ENCODE measurements at regions of chr10 and their contacts with region 1.

Region 1: DNA sequence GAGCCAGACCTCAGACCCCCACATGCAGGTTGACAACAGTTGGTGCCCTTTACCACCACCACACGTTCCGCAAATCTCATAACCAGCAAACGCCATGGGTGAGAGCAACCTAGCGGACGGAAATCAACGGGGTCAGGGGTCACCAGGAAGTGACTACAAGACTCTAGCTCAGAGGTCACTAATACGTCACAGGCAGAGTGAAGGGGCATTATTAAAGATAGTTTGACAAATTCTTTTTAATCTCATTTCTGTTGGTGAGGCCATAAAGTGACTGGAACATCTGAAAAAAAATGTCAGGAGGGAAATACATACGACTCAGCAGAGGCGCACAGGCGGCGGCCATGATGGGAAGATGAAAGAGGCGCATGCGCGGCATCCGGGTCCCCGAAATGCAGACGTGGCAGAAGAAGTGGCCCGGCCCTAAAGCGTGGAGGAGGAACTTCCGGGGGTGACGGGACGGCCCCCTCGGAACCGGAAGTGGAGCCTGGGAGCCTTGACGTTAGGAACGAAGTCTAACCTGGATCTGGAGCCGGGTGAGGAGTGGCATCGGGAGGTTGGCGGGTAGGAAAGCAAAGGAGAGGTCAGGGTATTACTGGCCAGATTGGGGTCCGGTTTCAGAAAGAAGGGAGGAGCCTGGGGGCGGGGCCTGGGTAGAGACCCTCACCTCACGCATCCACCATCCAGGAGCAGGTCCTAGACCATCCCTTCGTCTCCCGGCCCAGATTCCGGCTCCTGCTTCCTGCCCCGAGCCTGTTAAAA is at the start of gene SEC24C:
- DNase-seq: peak; percentile 98
- H3K4me3 Mint-ChIP-seq: peak within 1 kb of the TSS; percentile 97
- H3K27ac Mint-ChIP-seq: peak within 1 kb of the TSS; percentile 100
- H3K4me1 Mint-ChIP-seq: peaks cover 32% of the 10 kb centered on the region
- H3K27me3 Mint-ChIP-seq: no peaks in the 10 kb centered on the region
- total RNA-seq, gene SEC24C: 106 TPM in 2 replicates

Region 2: GRCh38 chr10:73358331-73359279 is 385.5 kb before region 1 on chr10 and contains the start of gene CFAP70:
- intact Hi-C with region 1: no loop called
- DNase-seq: peak; percentile 98
- H3K4me3 Mint-ChIP-seq: peak within 1 kb of the TSS; percentile 93
- H3K27ac Mint-ChIP-seq: peak within 1 kb of the TSS; percentile 89
- H3K4me1 Mint-ChIP-seq: peaks cover 16% of the 10 kb centered on the region
- H3K27me3 Mint-ChIP-seq: peaks cover 15% of the 10 kb centered on the region
- total RNA-seq, gene CFAP70: 0.17 and 0.33 TPM in 2 replicates

Region 3: GRCh38 chr10:73413528-73414229 is 330.4 kb before region 1 on chr10 and contains the start of gene ANXA7:
- intact Hi-C with region 1: loop called (anchors 1 kb)
- DNase-seq: peak; percentile 97
- H3K4me3 Mint-ChIP-seq: peak within 1 kb of the TSS; percentile 92
- H3K27ac Mint-ChIP-seq: peak within 1 kb of the TSS; percentile 90
- H3K4me1 Mint-ChIP-seq: peaks cover 33% of the 10 kb centered on the region
- H3K27me3 Mint-ChIP-seq: no peaks in the 10 kb centered on the region
- total RNA-seq, gene ANXA7: 169 and 171 TPM in 2 replicates

Region 4: GRCh38 chr10:73625884-73626752 is 118.0 kb before region 1 on chr10:
- intact Hi-C with region 1: loop called (anchors 5 kb)
- DNase-seq: peak; percentile 98
- H3K4me3 Mint-ChIP-seq: peak overlapping the region; percentile 96
- H3K27ac Mint-ChIP-seq: peak overlapping the region; percentile 96
- H3K4me1 Mint-ChIP-seq: peaks cover 16% of the 10 kb centered on the region
- H3K27me3 Mint-ChIP-seq: no peaks in the 10 kb centered on the region

Region 5: DNA sequence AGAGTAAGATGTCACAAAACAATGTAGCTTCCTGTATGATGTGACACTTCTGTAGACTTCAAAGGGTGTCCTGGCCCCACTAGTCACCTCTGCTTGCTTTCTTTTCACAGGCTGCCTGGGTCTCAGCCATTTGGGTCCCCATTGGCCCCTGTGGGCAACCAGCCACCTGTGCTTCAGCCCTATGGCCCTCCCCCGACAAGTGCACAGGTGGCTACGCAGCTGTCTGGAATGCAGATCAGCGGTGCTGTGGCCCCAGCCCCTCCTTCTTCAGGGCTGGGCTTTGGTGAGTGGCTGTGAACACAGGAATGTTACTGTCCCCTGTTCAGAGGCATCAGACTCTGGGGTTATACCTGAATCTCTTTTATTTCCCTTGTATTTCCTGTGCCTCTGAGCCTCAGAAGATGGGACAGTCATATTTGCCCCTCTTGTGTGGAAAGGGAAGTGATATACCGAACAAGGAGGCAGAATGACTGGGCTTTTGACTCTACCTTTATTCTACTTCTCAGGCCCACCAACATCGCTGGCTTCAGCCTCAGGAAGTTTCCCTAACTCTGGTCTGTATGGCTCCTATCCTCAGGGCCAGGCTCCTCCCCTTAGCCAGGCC is 15.5 kb after region 1 on chr10:
- intact Hi-C with region 1: loop called (anchors 2 kb)
- DNase-seq: peak; percentile 72
- H3K4me3 Mint-ChIP-seq: peak overlapping the region; percentile 52
- H3K27ac Mint-ChIP-seq: peak overlapping the region; percentile 85
- H3K4me1 Mint-ChIP-seq: peaks cover 37% of the 10 kb centered on the region
- H3K27me3 Mint-ChIP-seq: no peaks in the 10 kb centered on the region

Region 6: DNA sequence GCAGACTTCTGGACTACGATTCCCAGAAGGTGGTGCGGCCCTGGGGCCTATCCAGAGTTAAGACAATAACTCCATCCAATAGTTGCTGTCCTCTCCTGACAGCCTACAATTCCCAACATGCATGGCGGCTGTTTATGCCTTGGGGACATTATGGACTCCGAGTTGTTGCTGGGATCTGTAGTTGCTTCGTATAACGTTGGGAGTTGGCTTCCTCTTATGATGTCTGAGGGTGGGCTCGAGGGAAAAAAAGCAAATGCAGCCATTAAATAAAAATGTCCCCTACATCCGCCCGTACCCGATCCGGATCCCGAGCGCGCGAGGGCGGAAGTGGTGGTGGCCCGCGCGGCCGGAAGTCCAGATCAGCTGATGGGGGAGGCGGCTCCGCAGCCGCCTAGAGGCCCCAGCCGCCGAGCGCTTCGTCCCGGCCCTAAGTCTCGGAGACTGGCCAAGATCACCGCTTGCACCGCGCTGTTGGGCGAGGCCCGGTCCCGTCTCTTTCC is 41.2 kb after region 1 on chr10 and contains the start of gene ZSWIM8:
- intact Hi-C with region 1: loop called (anchors 1 kb)
- DNase-seq: peak; percentile 94
- H3K4me3 Mint-ChIP-seq: peak within 1 kb of the TSS; percentile 91
- H3K27ac Mint-ChIP-seq: peak within 1 kb of the TSS; percentile 98
- H3K4me1 Mint-ChIP-seq: peaks cover 39% of the 10 kb centered on the region
- H3K27me3 Mint-ChIP-seq: no peaks in the 10 kb centered on the region
- total RNA-seq, gene ZSWIM8: 50.8 and 53.5 TPM in 2 replicates